Activated CD4-positive, alpha-beta T cell treated with anti-CD3 and anti-CD28 coated beads for 36 hours (primary cell): ENCODE measurements at regions of chr6 and their contacts with region 1.

Region 1: GRCh38 chr6:110682460-110682853 is 132.8 kb downstream of the CDK19 start:
- DNase-seq: peak; percentile 73
- ATAC-seq: peak; percentile 99
- H3K4me3 Mint-ChIP-seq: no peak overlapping the region
- H3K27ac Mint-ChIP-seq: no peak overlapping the region
- H3K4me1 Mint-ChIP-seq: peaks cover 12% of the 10 kb centered on the region
- H3K27me3 Mint-ChIP-seq: no peaks in the 10 kb centered on the region

Region 2: GRCh38 chr6:110882271-110882613 is 199.8 kb after region 1 on chr6:
- CTCF ChIA-PET with region 1: interaction called, 28 read pairs
- POLR2A ChIA-PET with region 1: no interaction called
- intact Hi-C with region 1: loop called (anchors 1 kb)
- DNase-seq: no peak
- ATAC-seq: no peak
- H3K4me3 Mint-ChIP-seq: no peak overlapping the region
- H3K27ac Mint-ChIP-seq: peak overlapping the region; percentile 56
- H3K4me1 Mint-ChIP-seq: peaks cover 89% of the 10 kb centered on the region
- H3K27me3 Mint-ChIP-seq: no peaks in the 10 kb centered on the region

Region 3: DNA sequence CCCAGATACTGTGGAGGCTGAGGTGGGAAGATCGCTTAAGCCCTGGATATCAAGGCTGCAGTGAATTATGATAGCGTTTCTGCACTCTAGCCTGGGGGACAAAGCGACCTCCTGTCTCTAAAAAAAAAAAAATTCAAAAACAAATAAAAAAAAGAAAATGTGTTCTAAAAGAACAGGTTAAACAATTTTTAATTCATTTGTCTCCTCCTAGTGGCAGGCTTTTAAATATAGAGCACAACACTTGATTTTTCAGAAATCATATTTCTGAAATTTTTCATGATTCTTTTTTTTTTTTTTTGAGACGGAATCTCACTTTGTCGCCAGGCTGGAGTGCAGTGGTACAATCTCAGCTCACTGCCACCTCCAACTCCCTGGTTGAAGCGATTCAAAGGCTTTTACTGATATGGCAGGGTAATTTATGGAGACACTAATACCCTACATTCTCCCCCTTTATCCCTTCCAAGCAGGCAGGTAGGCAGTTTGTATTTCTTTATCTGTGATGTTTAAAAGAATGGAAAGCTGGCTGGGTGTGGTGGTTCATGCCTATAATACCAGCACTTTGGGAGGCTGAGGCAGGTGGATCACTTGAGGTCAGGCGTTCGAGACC is 267.3 kb after region 1 on chr6:
- CTCF ChIA-PET with region 1: interaction called, 27 read pairs
- POLR2A ChIA-PET with region 1: interaction called, 3 read pairs
- intact Hi-C with region 1: loop called (anchors 1 kb)
- DNase-seq: no peak
- ATAC-seq: no peak
- H3K4me3 Mint-ChIP-seq: no peak overlapping the region
- H3K27ac Mint-ChIP-seq: no peak overlapping the region
- H3K4me1 Mint-ChIP-seq: peaks cover 9% of the 10 kb centered on the region
- H3K27me3 Mint-ChIP-seq: peaks cover 1% of the 10 kb centered on the region

Region 4: DNA sequence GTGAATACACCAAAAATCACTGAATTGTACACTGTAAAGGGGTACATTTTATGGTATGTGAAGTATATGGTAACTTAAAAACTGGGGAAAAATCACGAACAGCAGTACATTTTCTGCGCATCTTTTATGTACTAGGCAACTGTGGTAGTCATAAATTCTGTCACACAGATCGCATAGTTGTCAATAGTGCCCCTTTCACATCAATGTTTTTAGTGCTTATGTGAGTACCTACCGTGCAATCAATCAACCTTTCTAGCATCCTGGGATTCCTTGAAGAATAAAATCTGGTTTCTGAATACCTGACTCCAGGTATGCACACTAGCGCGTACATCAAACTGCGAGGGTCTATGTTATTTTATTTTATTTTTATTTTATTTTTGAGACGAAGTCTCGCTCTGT is 298.7 kb after region 1 on chr6:
- CTCF ChIA-PET with region 1: interaction called, 3 read pairs
- POLR2A ChIA-PET with region 1: interaction called, 4 read pairs
- intact Hi-C with region 1: loop called in 1 of 2 experiments (anchors 1 kb)
- DNase-seq: no peak
- ATAC-seq: no peak
- H3K4me3 Mint-ChIP-seq: peak overlapping the region; percentile 99
- H3K27ac Mint-ChIP-seq: peak overlapping the region; percentile 97
- H3K4me1 Mint-ChIP-seq: peaks cover 31% of the 10 kb centered on the region
- H3K27me3 Mint-ChIP-seq: no peaks in the 10 kb centered on the region

Region 5: DNA sequence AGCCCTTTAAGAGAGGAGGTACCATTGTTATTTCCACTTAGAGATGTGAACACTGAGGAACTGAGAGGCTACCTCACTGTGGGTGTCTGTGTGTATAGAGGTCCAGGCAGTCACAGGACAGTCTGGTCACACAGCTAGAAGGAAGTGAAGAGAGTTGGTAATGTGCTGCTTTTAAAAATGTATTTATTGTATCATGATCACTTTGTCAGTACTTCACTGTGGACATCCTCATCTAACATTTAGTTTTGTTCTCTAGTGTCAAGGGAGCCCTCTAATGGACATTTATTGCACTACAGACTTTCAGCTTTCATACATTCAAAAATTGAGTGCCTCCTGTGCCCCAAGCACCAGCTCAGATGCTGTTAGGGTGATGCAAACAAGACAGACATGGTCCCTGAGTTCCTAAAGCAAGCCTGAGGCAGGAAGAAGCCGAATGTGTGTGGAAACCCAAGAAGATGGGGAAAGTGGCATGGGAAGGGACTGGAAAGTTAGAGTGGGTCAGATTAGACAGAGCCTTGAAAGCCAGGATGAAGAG is 527.8 kb after region 1 on chr6:
- CTCF ChIA-PET with region 1: interaction called, 3 read pairs
- POLR2A ChIA-PET with region 1: no interaction called
- intact Hi-C with region 1: loop called in 1 of 2 experiments (anchors 1 kb)
- DNase-seq: peak; percentile 13
- ATAC-seq: peak; percentile 78
- H3K4me3 Mint-ChIP-seq: no peak overlapping the region
- H3K27ac Mint-ChIP-seq: no peak overlapping the region
- H3K4me1 Mint-ChIP-seq: no peaks in the 10 kb centered on the region
- H3K27me3 Mint-ChIP-seq: no peaks in the 10 kb centered on the region

Region 6: GRCh38 chr6:111861431-111861885 is 1179.0 kb after region 1 on chr6:
- CTCF ChIA-PET with region 1: no interaction called
- POLR2A ChIA-PET with region 1: no interaction called
- intact Hi-C with region 1: no loop called
- DNase-seq: peak; percentile 48
- ATAC-seq: peak; percentile 40
- H3K4me3 Mint-ChIP-seq: peak overlapping the region; percentile 20
- H3K27ac Mint-ChIP-seq: peak overlapping the region; percentile 91
- H3K4me1 Mint-ChIP-seq: peaks cover 100% of the 10 kb centered on the region
- H3K27me3 Mint-ChIP-seq: no peaks in the 10 kb centered on the region